ENCODE measurements at regions of chr19 and their contacts with region 1.

Region 1: GRCh38 chr19:19515764-19516519 is at the start of gene NDUFA13:
- DNase-seq: peak; percentile 97
- ATAC-seq: peak; percentile 90
- H3K4me3 Mint-ChIP-seq: peak within 1 kb of the TSS; percentile 95
- H3K27ac Mint-ChIP-seq: peak within 1 kb of the TSS; percentile 93
- H3K4me1 Mint-ChIP-seq: peaks cover 38% of the 10 kb centered on the region
- H3K27me3 Mint-ChIP-seq: no peaks in the 10 kb centered on the region
- CTCF ChIP-seq: no peak
- total RNA-seq, gene NDUFA13: 294 and 317 TPM in 2 replicates

Region 2: DNA sequence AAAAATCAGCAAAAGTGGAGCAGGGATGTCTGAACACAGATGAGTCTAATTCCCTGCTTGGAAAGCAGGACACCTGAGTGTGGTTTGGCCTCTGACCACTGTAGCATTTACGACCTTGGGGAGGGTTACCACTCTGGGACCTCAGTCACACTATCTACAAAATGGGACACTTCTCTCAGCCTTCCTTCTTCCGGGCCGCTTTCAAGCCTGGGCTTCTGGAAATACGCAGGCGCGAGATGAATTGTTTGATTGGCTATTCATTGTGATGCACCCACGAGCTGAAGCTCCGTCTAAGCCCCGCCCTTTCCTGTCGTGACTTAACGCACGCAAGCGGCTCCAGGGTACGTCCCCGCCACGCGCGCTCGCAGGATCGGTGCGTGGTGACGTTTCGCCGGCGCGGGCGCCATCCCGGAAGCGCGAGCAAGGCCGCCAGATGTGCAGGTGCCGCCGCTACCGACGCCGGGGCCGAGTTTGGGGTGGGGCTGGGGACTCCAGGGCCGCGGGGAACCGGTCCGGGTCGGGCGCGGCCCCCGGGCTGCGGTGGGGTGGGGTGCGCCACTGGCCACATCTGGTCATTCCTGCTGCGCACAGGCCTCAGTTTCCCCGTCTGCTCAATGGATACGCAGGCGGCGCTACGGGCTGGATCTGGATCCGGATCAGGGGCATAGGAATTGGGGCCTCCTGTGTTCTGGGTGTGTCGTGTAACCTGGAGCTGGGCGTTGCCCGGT is 958.3 kb before region 1 on chr19 and contains the start of gene KXD1:
- CTCF ChIA-PET with region 1: no interaction called
- POLR2A ChIA-PET with region 1: interaction called, 10 read pairs
- intact Hi-C with region 1: no loop called
- DNase-seq: peak; percentile 93
- ATAC-seq: peak; percentile 99
- H3K4me3 Mint-ChIP-seq: peak within 1 kb of the TSS; percentile 87
- H3K27ac Mint-ChIP-seq: peak within 1 kb of the TSS; percentile 89
- H3K4me1 Mint-ChIP-seq: peaks cover 25% of the 10 kb centered on the region
- H3K27me3 Mint-ChIP-seq: no peaks in the 10 kb centered on the region
- CTCF ChIP-seq: no peak
- total RNA-seq, gene KXD1: 82.2 and 88.8 TPM in 2 replicates

Region 3: DNA sequence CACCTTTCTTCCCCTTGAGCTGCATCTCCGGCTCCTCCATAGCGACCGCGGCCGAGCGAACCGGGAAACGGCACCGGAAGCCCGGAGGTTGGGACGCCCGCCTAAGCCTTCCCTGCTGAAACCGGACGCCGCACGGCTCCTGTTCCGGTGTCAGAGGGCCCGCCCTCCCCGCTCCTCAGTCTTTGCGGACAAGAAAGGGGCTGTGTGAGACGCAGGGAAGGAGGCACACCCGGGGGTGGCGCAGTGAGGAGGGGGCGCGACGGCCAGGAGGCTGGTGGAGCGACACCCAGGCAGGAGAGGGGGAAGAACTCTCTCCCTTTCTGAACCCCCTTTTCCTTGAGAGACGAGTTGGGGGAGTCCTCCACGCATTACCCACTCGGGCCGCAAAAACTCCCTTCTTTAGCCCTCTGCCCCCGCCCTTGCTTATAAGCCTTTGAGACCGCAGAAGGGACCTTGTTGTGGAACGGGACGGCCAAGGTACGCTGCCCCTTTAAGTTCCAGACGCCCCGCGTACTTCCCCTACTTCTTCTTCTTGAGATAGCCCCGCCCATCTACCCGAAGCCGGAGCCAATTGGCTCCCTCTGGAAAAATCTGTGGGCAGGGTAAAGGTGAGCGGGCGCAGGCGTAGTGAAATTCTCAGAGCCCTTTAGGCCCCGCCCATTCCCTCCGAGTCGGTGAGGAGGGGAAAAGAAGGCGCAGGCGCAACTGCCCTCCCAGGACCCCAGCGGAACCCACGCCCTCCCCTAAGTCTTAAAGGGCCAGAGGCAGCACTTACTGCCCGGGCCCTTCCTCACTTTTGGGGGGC is 323.7 kb before region 1 on chr19 and contains the starts of genes BORCS8 and RFXANK:
- CTCF ChIA-PET with region 1: no interaction called
- POLR2A ChIA-PET with region 1: interaction called, 10 read pairs
- intact Hi-C with region 1: loop called (anchors 1 kb)
- DNase-seq: peak; percentile 91
- ATAC-seq: peak; percentile 85
- H3K4me3 Mint-ChIP-seq: peak within 1 kb of the TSS; percentile 99
- H3K27ac Mint-ChIP-seq: peak within 1 kb of the TSS; percentile 99
- H3K4me1 Mint-ChIP-seq: peaks cover 49% of the 10 kb centered on the region
- H3K27me3 Mint-ChIP-seq: no peaks in the 10 kb centered on the region
- CTCF ChIP-seq: no peak
- total RNA-seq, gene BORCS8: 51.8 and 52.3 TPM in 2 replicates
- total RNA-seq, gene RFXANK: 95.4 and 96.9 TPM in 2 replicates

Region 4: GRCh38 chr19:19385108-19385899 is 130.6 kb before region 1 on chr19:
- CTCF ChIA-PET with region 1: no interaction called
- POLR2A ChIA-PET with region 1: interaction called, 6 read pairs
- intact Hi-C with region 1: loop called (anchors 1 kb)
- DNase-seq: peak; percentile 98
- ATAC-seq: peak; percentile 89
- H3K4me3 Mint-ChIP-seq: peak overlapping the region; percentile 87
- H3K27ac Mint-ChIP-seq: peak overlapping the region; percentile 83
- H3K4me1 Mint-ChIP-seq: peaks cover 43% of the 10 kb centered on the region
- H3K27me3 Mint-ChIP-seq: no peaks in the 10 kb centered on the region
- CTCF ChIP-seq: no peak

Region 5: DNA sequence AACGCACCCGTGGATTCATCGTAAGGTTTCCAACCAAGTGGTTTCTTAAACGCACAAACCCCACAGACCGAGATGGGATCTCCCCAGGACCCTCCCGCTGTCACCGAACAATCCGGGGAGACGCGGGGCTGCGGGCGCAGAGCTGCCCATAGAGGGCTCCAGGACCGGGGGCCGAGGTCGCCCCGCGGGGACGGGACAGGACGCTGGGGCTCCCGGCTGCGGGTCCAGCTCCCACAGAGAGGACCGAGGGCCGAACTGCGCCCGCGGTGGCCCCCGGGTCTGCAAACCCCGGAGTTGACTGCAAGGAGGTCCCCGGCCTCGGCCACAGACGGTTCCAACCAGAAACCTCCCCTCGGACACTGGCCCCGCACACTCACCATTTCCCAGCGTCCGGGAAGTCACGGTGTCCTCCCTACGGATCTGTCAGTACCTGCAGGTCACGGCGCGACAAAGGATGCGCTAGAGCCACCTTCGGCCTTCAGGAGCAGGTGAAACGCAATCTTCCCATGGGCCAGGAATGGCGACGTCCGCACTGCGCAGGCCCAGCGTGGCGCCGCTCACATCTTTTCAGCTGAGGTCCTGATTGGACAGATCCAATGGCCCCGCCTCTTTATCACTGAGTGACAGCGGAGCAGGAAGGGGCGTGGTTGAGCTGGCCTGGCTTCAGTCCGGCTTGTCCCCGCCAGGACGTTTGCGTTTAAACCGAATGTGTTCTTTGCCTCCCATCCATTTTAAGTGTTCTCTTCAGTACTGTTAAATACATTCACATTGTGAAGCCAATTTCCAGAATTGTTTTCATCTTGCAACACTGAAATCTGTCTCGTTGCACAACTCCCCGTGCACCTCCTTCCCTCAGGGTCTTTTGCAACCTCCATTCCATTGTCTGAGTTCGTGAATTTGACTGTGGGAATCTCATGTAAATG is 216.9 kb after region 1 on chr19 and contains the start of gene ZNF14:
- CTCF ChIA-PET with region 1: no interaction called
- POLR2A ChIA-PET with region 1: interaction called, 3 read pairs
- intact Hi-C with region 1: loop called (anchors 5 kb)
- DNase-seq: peak; percentile 79
- ATAC-seq: peak; percentile 99
- H3K4me3 Mint-ChIP-seq: peak within 1 kb of the TSS; percentile 99
- H3K27ac Mint-ChIP-seq: peak within 1 kb of the TSS; percentile 96
- H3K4me1 Mint-ChIP-seq: peaks cover 28% of the 10 kb centered on the region
- H3K27me3 Mint-ChIP-seq: no peaks in the 10 kb centered on the region
- CTCF ChIP-seq: no peak
- total RNA-seq, gene ZNF14: 11.8 and 13.4 TPM in 2 replicates

Measured in activated B cell treated with CpG ODN at 0.5 μM for 24 hours (primary cell).